ENCODE measurements at regions of chr3 and their contacts with region 1.

Region 1: GRCh38 chr3:115120597-115120996 is 26.5 kb downstream of the ZBTB20 start:
- DNase-seq: no peak
- ATAC-seq: no peak
- H3K4me3 ChIP-seq: no peak overlapping the region
- H3K4me3 Mint-ChIP-seq: no peak overlapping the region
- H3K27ac ChIP-seq: no peak overlapping the region
- H3K27ac Mint-ChIP-seq: peak overlapping the region; percentile 52
- H3K4me1 ChIP-seq: no peaks in the 10 kb centered on the region
- H3K4me1 Mint-ChIP-seq: peaks cover 22% of the 10 kb centered on the region
- H3K27me3 ChIP-seq: no peaks in the 10 kb centered on the region
- H3K27me3 Mint-ChIP-seq: no peaks in the 10 kb centered on the region
- CTCF ChIP-seq: no peak

Region 2: GRCh38 chr3:114519415-114519814 is 601.2 kb before region 1 on chr3:
- CTCF ChIA-PET with region 1: no interaction called
- POLR2A ChIA-PET with region 1: no interaction called
- intact Hi-C with region 1: no loop called
- DNase-seq: peak in 2 of 9 experiments; percentile 22 to 41
- ATAC-seq: no peak
- H3K4me3 ChIP-seq: no peak overlapping the region
- H3K4me3 Mint-ChIP-seq: no peak overlapping the region
- H3K27ac ChIP-seq: no peak overlapping the region
- H3K27ac Mint-ChIP-seq: no peak overlapping the region
- H3K4me1 ChIP-seq: no peaks in the 10 kb centered on the region
- H3K4me1 Mint-ChIP-seq: no peaks in the 10 kb centered on the region
- H3K27me3 ChIP-seq: no peaks in the 10 kb centered on the region
- H3K27me3 Mint-ChIP-seq: no peaks in the 10 kb centered on the region
- CTCF ChIP-seq: no peak

Region 3: GRCh38 chr3:115071611-115072010 is 49.0 kb before region 1 on chr3:
- CTCF ChIA-PET with region 1: no interaction called
- POLR2A ChIA-PET with region 1: no interaction called
- intact Hi-C with region 1: no loop called
- DNase-seq: no peak
- ATAC-seq: no peak
- H3K4me3 ChIP-seq: no peak overlapping the region
- H3K4me3 Mint-ChIP-seq: no peak overlapping the region
- H3K27ac ChIP-seq: no peak overlapping the region
- H3K27ac Mint-ChIP-seq: no peak overlapping the region
- H3K4me1 ChIP-seq: no peaks in the 10 kb centered on the region
- H3K4me1 Mint-ChIP-seq: peaks cover 48% of the 10 kb centered on the region
- H3K27me3 ChIP-seq: no peaks in the 10 kb centered on the region
- H3K27me3 Mint-ChIP-seq: no peaks in the 10 kb centered on the region
- CTCF ChIP-seq: no peak

Region 4: GRCh38 chr3:115141033-115141757 is 20.6 kb after region 1 on chr3:
- CTCF ChIA-PET with region 1: no interaction called
- POLR2A ChIA-PET with region 1: interaction called, 4 read pairs
- intact Hi-C with region 1: loop called (anchors 2 kb)
- DNase-seq: no peak
- ATAC-seq: no peak
- H3K4me3 ChIP-seq: no peak overlapping the region
- H3K4me3 Mint-ChIP-seq: no peak overlapping the region
- H3K27ac ChIP-seq: no peak overlapping the region
- H3K27ac Mint-ChIP-seq: no peak overlapping the region
- H3K4me1 ChIP-seq: peaks cover 5% of the 10 kb centered on the region
- H3K4me1 Mint-ChIP-seq: peaks cover 53% of the 10 kb centered on the region
- H3K27me3 ChIP-seq: no peaks in the 10 kb centered on the region
- H3K27me3 Mint-ChIP-seq: no peaks in the 10 kb centered on the region
- CTCF ChIP-seq: no peak

Region 5: DNA sequence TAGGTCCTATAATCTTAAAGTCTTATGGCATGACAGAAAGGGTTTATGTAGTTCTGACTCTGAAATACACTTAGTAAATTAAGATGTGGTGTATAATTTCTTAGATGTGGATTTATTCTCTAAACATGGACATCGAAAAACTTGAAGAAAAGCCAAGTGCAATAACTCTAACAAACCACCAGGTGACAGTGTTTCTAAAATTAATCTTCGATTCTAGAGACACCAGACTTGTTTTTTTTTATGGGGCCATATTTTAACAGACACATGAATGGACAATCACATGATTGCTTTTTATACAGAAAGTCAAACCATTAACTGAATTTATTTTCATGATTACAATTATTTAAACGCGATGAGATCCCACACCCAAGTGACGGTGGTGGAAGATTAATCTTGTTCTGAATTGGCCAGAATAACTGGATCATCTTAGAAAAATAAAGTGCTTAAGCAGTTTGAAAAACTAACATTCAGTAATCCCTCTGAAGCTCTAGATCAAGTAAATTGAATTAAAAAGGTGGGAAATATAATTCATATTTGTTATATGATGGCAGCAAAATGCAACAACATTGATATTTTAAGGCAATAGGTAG is 1019.6 kb after region 1 on chr3:
- CTCF ChIA-PET with region 1: no interaction called
- POLR2A ChIA-PET with region 1: no interaction called
- intact Hi-C with region 1: no loop called
- DNase-seq: no peak
- ATAC-seq: no peak
- H3K4me3 ChIP-seq: no peak overlapping the region
- H3K4me3 Mint-ChIP-seq: no peak overlapping the region
- H3K27ac ChIP-seq: no peak overlapping the region
- H3K27ac Mint-ChIP-seq: no peak overlapping the region
- H3K4me1 ChIP-seq: no peaks in the 10 kb centered on the region
- H3K4me1 Mint-ChIP-seq: no peaks in the 10 kb centered on the region
- H3K27me3 ChIP-seq: no peaks in the 10 kb centered on the region
- H3K27me3 Mint-ChIP-seq: no peaks in the 10 kb centered on the region
- CTCF ChIP-seq: no peak

Measured in CD8-positive, alpha-beta T cell (primary cell).